GM10248 (cell line): ENCODE measurements at regions of chr5 and their contacts with region 1.

Region 1: DNA sequence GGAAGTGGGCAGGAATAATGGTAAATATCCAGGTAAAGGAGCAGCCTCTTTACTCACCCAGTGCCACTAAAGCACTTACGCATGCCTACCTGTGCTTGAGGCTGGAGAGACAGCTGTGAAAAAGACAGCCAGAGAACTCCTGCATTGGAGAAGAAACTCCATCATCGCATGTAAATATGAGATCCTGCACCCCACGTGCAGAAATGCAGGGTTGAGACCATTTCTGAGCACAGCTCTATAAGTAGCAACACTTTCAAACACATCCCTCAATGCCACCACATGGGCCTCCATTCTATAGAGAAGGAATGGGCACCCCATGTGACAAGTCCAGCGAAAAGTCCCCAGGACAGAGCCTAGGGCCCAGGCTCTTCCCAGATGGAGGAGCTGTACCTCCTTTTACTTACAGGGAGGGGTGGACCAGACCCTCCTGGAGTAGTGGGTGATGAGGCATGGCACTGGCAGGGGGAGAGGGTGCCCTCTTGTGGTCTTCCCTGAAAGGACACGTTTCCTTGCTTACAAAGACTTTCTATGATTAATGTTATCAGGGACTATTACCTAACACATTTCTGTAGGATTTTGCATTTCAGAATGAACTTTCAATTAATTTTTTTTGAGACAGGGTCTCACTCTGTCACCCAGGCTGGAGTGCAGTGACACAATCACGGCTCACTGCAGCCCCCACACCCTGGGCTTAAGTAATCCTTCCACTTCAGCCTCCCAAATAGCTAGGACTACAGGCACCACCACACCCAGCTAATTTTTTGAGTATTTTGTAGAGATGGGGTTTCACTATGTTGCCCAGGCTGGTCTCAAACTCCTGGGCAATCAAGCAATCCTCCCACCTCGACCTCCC is 55.3 kb upstream of the IL17B start:
- DNase-seq: peak; percentile 74
- CTCF ChIP-seq: peak; percentile 53

Region 2: GRCh38 chr5:149271716-149272563 is 162.4 kb before region 1 on chr5 and contains the start of gene AFAP1L1:
- CTCF ChIA-PET with region 1: no interaction called
- POLR2A ChIA-PET with region 1: no interaction called
- DNase-seq: no peak
- CTCF ChIP-seq: no peak

Region 3: GRCh38 chr5:149317281-149318048 is 116.9 kb before region 1 on chr5:
- CTCF ChIA-PET with region 1: interaction called, 22 read pairs
- POLR2A ChIA-PET with region 1: no interaction called
- DNase-seq: peak; percentile 75
- CTCF ChIP-seq: peak; percentile 74

Region 4: DNA sequence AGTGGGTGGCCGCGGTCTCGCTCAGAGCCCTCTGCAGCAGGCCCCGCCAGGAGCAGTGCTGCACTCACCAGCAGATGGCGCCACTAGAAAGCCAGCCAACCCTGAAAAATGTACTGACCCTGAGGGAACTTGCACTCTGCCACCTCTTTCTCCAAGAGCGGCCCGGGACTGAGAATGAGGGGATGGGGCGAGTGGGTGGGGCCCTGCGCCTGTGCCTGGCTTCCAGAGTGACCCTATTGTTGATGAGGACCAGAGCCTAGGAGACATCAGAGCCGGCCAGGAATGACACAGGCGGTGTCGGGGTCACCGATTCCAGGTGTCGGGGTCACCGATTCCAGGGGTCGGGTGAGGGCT is 52.4 kb before region 1 on chr5:
- CTCF ChIA-PET with region 1: interaction called, 22 read pairs
- POLR2A ChIA-PET with region 1: no interaction called
- DNase-seq: peak; percentile 89
- CTCF ChIP-seq: peak; percentile 94

Region 5: GRCh38 chr5:149423794-149424268 is 10.6 kb before region 1 on chr5:
- CTCF ChIA-PET with region 1: interaction called, 13 read pairs
- POLR2A ChIA-PET with region 1: no interaction called
- DNase-seq: no peak
- CTCF ChIP-seq: no peak

Region 6: GRCh38 chr5:149561848-149562247 is 127.5 kb after region 1 on chr5:
- CTCF ChIA-PET with region 1: interaction called, 110 read pairs
- POLR2A ChIA-PET with region 1: no interaction called
- DNase-seq: no peak
- CTCF ChIP-seq: no peak

Region 7: DNA sequence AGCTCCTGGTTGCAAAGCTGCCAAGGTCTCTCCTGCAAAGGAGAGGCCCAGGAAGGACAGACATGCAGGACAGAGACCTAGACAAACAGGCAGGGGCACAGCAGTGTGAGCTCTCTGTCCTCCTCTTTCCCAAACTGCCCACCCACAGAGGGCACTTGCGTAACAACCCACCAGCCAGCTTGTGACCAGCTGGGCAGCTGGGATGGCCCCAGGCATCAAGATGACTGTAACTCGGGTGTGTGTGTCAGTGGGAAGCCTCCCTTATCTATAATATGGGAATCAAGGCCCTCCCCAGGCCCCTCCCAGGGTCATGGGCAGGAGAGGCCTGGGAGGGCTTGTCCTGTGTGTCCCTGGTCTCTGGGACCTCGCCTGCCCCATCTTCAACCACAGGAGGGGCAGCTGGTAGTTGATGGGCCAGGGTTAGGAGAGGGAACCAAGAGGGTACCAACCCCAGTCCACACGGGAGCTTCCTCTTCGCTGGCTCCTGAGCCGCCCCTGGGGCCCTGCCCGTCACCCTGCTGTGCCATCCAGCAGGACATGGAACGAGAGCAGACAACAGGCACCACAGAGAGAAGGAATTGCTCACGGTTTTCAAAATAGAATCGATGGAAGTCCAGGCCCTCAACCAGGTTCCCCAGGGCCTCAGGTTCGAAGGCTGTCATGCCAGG is 793.4 kb after region 1 on chr5:
- CTCF ChIA-PET with region 1: no interaction called
- POLR2A ChIA-PET with region 1: no interaction called
- DNase-seq: no peak
- CTCF ChIP-seq: no peak